ENCODE measurements at regions of chrX and their contacts with region 1.

Region 1: GRCh38 chrX:116490104-116490503 is 27.3 kb upstream of the CT83 start:
- DNase-seq: peak; percentile 1
- H3K4me3 ChIP-seq: no peak overlapping the region
- H3K27ac ChIP-seq: no peak overlapping the region
- H3K4me1 ChIP-seq: no peaks in the 10 kb centered on the region
- H3K27me3 ChIP-seq: no peaks in the 10 kb centered on the region
- CTCF ChIP-seq: no peak
- POLR2A ChIP-seq: no peak

Region 2: GRCh38 chrX:116204932-116205331 is 285.2 kb before region 1 on chrX:
- CTCF ChIA-PET with region 1: interaction called, 3 read pairs
- POLR2A ChIA-PET with region 1: no interaction called
- dilution Hi-C with region 1: no loop called
- intact Hi-C with region 1: loop called (anchors 2 kb)
- DNase-seq: peak; percentile 1
- H3K4me3 ChIP-seq: no peak overlapping the region
- H3K27ac ChIP-seq: no peak overlapping the region
- H3K4me1 ChIP-seq: no peaks in the 10 kb centered on the region
- H3K27me3 ChIP-seq: no peaks in the 10 kb centered on the region
- CTCF ChIP-seq: peak in 1 of 2 donors; percentile 13
- POLR2A ChIP-seq: no peak